ENCODE measurements at regions of chr1 and their contacts with region 1.

Region 1: DNA sequence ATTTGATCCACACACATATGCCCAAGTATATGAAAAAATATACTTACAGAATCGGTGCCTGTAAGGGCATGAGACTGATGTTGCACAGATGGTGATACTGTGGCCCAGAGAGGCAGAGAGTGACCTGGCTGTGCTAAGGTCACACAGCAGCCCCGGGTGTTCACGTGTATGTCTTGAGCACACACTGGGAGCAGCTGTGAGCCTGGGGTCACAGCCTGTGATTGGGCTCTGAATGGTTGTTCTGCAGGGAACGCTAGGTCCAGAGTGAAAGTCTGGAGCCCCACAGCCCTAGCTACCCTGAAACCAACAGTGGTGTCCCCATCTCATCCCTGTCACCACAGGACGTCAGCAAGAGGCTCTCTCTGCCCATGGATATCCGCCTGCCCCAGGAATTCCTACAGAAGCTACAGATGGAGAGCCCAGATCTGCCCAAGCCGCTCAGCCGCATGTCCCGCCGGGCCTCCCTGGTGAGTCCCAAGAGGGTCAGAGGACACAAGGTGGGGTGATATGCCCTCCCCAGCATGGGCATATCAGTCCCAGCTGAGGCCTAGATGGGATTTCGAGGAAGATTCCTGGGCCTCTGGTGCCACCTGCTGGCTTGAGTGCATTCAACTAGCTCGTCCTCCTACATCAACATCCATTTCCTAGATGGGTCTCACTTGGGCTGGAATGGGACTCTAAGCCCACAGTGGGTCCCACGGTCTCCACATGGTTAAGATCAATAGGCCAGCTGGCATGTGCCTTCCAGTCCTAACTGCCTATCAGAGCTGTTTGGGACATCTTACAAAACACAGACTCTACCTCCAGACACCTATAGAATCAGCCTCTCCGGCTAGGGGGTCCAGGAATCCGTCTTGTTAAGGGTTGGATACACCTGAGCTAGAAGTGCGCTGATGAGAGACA is 19.7 kb downstream of the CDK18 start:
- DNase-seq: peak; percentile 48 to 83 (median 68)
- ATAC-seq: peak; percentile 61
- H3K4me3 ChIP-seq: no peak overlapping the region
- H3K4me3 Mint-ChIP-seq: no peak overlapping the region
- H3K27ac ChIP-seq: no peak overlapping the region
- H3K27ac Mint-ChIP-seq: no peak overlapping the region
- H3K4me1 ChIP-seq: peaks cover 4% of the 10 kb centered on the region
- H3K4me1 Mint-ChIP-seq: no peaks in the 10 kb centered on the region
- H3K27me3 ChIP-seq: peaks cover 0 to 4% of the 10 kb centered on the region in 2 experiments
- H3K27me3 Mint-ChIP-seq: no peaks in the 10 kb centered on the region
- CTCF ChIP-seq: peak; percentile 74

Region 2: GRCh38 chr1:205335643-205336091 is 188.5 kb before region 1 on chr1:
- CTCF ChIA-PET with region 1: interaction called, 5 read pairs
- POLR2A ChIA-PET with region 1: no interaction called
- intact Hi-C with region 1: loop called (anchors 1 to 5 kb)
- DNase-seq: peak; percentile 63 to 89 (median 74)
- ATAC-seq: peak; percentile 99
- H3K4me3 ChIP-seq: no peak overlapping the region
- H3K4me3 Mint-ChIP-seq: no peak overlapping the region
- H3K27ac ChIP-seq: no peak overlapping the region
- H3K27ac Mint-ChIP-seq: no peak overlapping the region
- H3K4me1 ChIP-seq: no peaks in the 10 kb centered on the region
- H3K4me1 Mint-ChIP-seq: no peaks in the 10 kb centered on the region
- H3K27me3 ChIP-seq: no peaks in the 10 kb centered on the region
- H3K27me3 Mint-ChIP-seq: no peaks in the 10 kb centered on the region
- CTCF ChIP-seq: peak; percentile 93

Region 3: DNA sequence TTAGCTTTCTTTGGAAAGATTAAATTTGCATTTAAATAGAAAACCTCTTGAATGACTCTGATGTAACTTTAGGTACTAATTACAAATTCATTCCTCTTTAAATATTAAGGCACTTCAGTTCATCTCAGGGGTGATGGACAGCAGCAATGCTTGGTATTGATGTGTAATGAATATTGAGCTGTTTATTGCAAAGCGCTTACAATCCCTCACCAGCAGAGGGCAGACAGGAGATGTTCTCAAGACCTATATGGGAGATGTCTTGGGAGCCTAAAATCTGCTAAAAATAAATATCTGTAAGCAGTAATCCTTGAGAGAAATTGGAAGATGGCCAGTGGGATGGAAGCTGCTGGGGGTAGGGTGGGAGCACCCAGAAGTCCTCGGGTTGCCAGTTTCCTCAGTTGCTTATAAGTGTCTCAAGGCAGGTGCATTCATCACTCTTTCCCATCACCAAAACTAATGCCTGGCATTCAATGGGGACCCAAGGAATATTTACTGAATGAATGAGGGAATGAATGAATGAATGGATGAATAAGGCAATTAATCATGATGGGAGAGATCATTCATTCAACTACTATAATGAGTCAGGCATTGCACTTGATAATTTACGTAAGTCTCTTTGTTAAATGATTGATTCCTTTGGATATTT is 169.8 kb before region 1 on chr1:
- CTCF ChIA-PET with region 1: interaction called, 12 read pairs
- POLR2A ChIA-PET with region 1: no interaction called
- intact Hi-C with region 1: loop called (anchors 1 to 2 kb)
- DNase-seq: peak; percentile 34 to 82 (median 52)
- ATAC-seq: peak; percentile 83
- H3K4me3 ChIP-seq: no peak overlapping the region
- H3K4me3 Mint-ChIP-seq: no peak overlapping the region
- H3K27ac ChIP-seq: no peak overlapping the region
- H3K27ac Mint-ChIP-seq: no peak overlapping the region
- H3K4me1 ChIP-seq: no peaks in the 10 kb centered on the region
- H3K4me1 Mint-ChIP-seq: no peaks in the 10 kb centered on the region
- H3K27me3 ChIP-seq: peaks cover 6 to 11% of the 10 kb centered on the region in 2 experiments
- H3K27me3 Mint-ChIP-seq: peaks cover 16% of the 10 kb centered on the region
- CTCF ChIP-seq: peak; percentile 95

Region 4: DNA sequence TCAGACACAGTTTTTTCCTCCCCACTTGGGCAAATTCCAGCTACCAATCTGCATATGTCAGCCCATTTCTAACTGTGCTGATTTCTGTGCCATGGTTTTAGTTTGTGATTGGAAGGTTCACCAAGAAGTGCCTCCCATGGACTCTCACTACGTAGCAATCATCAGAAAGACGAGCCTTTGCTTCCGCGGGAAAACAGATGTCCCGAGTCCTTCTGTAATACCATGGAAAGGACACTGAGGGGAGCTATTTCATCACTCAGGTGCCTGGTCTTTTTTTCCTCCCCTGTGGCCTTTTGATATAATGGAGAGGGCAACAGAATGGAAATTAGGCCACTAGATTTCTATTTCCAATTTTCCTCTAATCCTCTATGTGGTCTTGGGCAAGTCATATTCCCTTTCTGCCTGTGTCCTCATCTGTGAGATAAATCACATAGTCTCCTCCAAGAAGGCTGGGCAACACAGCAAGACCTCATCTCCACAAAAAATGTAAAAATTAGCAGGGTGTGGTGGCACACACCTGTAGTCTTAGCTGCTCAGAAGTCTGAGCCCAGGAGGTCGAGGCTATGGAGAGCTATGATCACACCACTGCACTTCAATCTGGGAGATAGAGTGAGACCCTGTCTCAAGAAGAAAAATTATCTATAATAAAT is 127.0 kb before region 1 on chr1:
- CTCF ChIA-PET with region 1: interaction called, 18 read pairs
- POLR2A ChIA-PET with region 1: interaction called, 3 read pairs
- intact Hi-C with region 1: loop called in 1 of 2 experiments (anchors 2 kb)
- DNase-seq: peak in 4 of 14 experiments; percentile 15 to 65 (median 60)
- ATAC-seq: peak; percentile 41
- H3K4me3 ChIP-seq: no peak overlapping the region
- H3K4me3 Mint-ChIP-seq: no peak overlapping the region
- H3K27ac ChIP-seq: no peak overlapping the region
- H3K27ac Mint-ChIP-seq: no peak overlapping the region
- H3K4me1 ChIP-seq: peaks cover 2% of the 10 kb centered on the region
- H3K4me1 Mint-ChIP-seq: peaks cover 7% of the 10 kb centered on the region
- H3K27me3 ChIP-seq: no peaks in the 10 kb centered on the region
- H3K27me3 Mint-ChIP-seq: peaks cover 19% of the 10 kb centered on the region
- CTCF ChIP-seq: peak; percentile 37

Measured in CD4-positive, alpha-beta T cell (primary cell).